Right ventricle myocardium superior (tissue), 1 donor: ENCODE measurements at regions of chr2 and their contacts with region 1.

Region 1: DNA sequence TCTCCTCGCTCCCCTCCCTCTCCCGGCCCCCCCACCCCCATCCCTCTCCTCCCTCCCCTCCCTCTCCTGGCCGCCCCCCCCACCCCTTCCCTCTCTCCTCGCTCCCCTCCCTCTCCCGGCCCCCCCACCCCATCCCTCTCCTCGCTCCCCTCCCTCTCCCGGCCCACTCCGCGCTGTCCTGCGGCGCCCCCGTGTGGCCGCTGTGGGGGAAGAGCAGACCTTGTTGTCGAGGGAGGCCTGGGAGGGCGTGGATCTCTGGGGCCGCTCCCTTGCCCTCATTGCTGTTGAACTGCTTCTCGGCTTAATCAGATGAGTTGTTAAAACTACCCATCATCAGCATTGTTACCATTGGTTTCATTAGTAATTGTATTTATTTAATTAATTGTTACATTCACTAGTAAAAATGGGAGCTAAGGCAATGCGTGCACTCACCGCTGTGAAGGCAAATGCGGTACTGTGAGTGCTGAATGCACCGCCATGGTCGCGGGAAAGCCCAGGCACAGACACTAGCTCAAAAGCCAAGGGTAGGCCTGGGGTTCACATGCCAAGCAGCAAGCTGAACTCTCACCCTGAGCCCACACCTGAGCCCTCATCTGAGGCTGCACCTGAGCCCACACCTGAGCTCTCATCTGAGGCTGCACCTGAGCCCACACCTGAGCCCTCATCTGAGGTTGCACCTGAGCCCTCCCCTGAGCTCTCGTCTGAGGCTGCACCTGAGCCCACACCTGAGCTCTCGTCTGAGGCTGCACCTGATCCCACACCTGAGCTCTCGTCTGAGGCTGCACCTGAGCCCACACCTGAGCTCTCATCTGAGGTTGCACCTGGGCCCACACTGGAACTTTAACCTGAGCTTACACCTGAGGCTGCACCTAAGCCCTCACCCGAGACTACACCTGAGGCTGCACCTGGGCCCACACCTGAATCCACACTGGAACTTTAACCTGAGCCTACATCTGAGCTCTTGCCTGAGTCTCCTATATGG is 8.8 kb downstream of the RTP5 start:
- DNase-seq: peak; percentile 85
- ATAC-seq: peak; percentile 42

Region 2: DNA sequence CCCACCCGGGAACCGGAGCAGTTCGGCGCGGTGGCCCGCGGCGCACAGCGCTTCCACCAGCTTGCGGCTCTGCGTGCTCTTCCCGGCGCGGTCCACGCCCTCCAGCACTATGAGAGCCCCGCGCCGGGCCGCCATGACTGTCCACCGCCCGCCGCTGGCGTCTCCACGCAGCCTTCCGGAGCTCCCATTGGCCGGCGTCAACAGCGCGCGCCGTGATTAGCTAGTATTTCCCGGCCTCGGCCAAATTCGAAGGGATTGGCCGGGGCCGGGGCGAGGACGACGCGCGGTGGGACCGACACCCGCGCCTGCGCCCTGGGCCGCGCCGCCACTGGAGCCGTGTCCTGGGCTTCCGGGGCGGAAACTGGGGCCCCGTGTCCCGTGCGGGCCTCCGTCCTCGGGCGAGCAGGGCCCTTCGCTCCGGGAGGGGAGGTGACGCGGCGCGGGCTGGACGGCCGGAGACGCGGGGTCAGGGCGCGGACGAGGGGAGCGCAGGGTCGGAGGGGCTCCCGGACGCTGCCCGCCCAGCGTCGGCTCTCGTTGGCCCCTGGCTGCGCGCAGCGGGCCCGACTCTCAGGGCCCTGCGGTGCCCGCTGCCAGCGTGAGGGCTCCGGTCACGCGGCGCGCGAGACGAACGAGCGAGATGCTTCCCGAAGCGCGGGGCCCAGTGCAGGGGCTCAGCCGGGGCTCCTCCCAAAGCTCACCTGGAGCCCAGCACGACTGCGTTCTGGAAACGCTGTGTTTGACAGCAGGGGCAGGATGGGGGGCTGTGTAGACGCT is 191.4 kb before region 1 on chr2 and contains the start of gene DTYMK:
- intact Hi-C with region 1: no loop called
- DNase-seq: peak; percentile 98
- ATAC-seq: peak; percentile 99
- total RNA-seq, gene DTYMK: 9.4 TPM

Region 3: DNA sequence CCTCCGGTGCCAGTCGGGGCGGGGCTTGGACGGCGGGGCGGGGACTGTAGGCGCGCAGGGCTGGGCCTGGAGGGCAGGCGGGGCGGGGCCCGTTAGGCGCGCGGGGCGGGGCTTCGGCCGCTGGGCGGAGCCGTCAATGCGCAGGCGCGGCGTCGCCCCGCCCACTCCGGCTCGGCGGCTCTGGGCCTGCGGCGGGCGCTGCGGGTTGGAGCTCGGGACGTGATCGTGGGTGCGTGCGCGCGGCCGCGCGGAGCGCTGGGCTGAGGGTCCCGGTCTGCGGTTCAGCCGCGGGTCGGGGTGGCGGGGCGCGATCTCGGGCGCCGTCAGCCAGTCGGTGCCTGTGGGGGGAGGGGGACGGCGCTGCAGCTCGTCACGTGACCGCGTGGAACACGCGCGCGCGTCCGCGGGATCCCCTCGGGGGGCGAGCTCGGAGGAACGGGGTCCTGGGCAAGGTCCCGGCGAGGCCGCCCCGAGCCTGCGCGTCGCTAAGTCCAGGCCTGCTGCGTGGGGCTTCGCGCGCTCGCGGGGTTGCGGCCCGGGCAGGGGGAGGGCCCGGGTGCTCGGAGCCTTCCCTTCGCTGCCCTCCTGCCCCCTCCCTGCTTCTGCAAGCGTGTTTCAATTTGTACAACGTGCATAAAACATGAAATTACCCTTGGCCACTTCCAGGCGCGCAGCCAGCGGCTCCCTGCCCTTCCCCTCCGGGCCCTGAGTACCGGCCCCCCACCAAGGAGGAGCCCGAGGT is 143.6 kb before region 1 on chr2 and contains the start of gene D2HGDH:
- intact Hi-C with region 1: loop called (anchors 5 kb)
- DNase-seq: peak; percentile 98
- ATAC-seq: peak; percentile 95
- total RNA-seq, gene D2HGDH: 19.0 TPM